IMR-90 (cell line): ENCODE measurements at regions of chr6 and their contacts with region 1.

Region 1: DNA sequence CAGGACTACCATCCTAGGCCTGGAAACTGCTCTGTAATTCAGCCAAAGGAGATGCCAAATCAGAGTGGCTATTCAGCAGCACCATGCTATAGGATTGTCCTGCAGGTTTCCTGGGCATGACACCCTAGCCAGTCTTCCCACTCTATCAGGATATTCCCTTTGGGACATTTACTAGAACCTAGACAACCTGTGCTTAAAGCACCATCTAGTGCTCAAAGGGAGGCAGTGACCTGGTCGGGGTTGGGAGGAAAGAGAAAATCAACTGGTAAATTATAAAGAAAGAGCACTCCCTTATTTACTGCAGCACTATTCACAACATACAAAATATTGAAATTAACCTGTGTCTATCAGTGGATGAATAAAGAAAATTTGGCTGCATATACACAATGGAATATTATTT is 67.2 kb upstream of the SMLR1 start:
- DNase-seq: peak; percentile 61
- ATAC-seq: peak; percentile 83
- H3K4me3 ChIP-seq: no peak overlapping the region
- H3K27ac ChIP-seq: no peak overlapping the region
- H3K4me1 ChIP-seq: no peaks in the 10 kb centered on the region
- H3K27me3 ChIP-seq: peaks cover 8% of the 10 kb centered on the region
- CTCF ChIP-seq: peak; percentile 85
- POLR2A ChIP-seq: no peak
- RAD21 ChIP-seq: peak; percentile 88

Region 2: GRCh38 chr6:130070792-130071191 is 689.2 kb before region 1 on chr6:
- CTCF ChIA-PET with region 1: no interaction called
- POLR2A ChIA-PET with region 1: no interaction called
- dilution Hi-C with region 1: no loop called
- in situ Hi-C with region 1: loop called (anchors 25 kb)
- intact Hi-C with region 1: no loop called
- DNase-seq: no peak
- ATAC-seq: no peak
- H3K4me3 ChIP-seq: no peak overlapping the region
- H3K27ac ChIP-seq: no peak overlapping the region
- H3K4me1 ChIP-seq: peaks cover 2% of the 10 kb centered on the region
- H3K27me3 ChIP-seq: no peaks in the 10 kb centered on the region
- CTCF ChIP-seq: no peak
- POLR2A ChIP-seq: no peak
- RAD21 ChIP-seq: no peak

Region 3: GRCh38 chr6:131660195-131660594 is 900.2 kb after region 1 on chr6:
- CTCF ChIA-PET with region 1: no interaction called
- POLR2A ChIA-PET with region 1: no interaction called
- dilution Hi-C with region 1: no loop called
- in situ Hi-C with region 1: no loop called
- intact Hi-C with region 1: no loop called
- DNase-seq: peak; percentile 78
- ATAC-seq: peak; percentile 53
- H3K4me3 ChIP-seq: no peak overlapping the region
- H3K27ac ChIP-seq: no peak overlapping the region
- H3K4me1 ChIP-seq: peaks cover 5% of the 10 kb centered on the region
- H3K27me3 ChIP-seq: no peaks in the 10 kb centered on the region
- CTCF ChIP-seq: no peak
- POLR2A ChIP-seq: no peak
- RAD21 ChIP-seq: no peak